IMR-90 (cell line): ENCODE measurements at regions of chr6 and their contacts with region 1.

Region 1: DNA sequence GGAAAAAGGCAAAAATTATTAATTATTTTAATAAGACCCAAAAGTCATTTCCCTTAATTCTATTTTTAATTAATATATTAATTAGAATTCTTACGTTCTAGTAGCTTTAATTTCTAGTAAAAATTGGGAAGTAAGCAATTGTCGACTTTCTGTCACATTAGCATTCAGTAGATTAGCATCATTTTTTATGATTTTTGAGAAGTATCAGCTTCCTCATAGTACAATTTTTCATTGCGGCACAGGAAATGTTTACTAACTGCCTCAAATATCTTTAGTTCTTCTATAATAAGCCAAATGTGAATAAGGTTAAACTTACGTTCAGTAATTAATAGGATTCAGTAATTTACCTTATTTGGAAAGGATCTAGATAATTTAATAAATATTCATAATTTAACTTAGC is 687.4 kb downstream of the EPM2A start:
- DNase-seq: no peak
- ATAC-seq: no peak
- H3K4me3 ChIP-seq: no peak overlapping the region
- H3K27ac ChIP-seq: no peak overlapping the region
- H3K4me1 ChIP-seq: peaks cover 4% of the 10 kb centered on the region; the same call in 1 of the 2 replicates
- H3K27me3 ChIP-seq: no peaks in the 10 kb centered on the region
- CTCF ChIP-seq: no peak
- POLR2A ChIP-seq: no peak
- RAD21 ChIP-seq: no peak

Region 2: DNA sequence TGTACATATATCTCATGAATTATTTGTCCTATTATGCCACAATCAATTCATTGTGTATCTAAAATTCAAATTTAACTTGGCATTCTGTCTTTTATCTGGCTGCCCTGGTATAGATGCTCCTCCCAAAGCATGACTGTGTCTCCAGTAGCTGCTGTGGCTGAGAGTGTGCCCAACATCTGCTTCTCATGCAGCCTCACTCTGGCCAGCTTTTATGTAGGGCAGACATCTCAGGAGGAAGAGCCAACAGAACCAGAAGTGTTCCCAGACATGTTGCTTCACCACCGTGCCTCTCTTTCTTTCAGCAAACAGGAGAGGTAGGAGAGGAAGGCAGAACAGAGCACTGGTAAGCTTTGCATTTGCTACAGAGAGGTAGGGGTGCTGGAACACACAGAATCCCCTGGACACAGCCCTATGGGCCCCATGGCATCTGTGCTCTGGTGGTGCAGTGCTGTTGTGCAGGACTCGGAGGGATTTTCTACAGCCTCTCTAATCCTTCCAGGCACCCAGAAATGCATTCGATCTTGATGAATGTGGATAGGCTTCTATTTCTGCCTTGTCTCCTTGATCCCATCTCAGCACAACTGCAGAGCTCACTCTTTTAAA is 125.7 kb before region 1 on chr6:
- CTCF ChIA-PET with region 1: no interaction called
- POLR2A ChIA-PET with region 1: no interaction called
- dilution Hi-C with region 1: no loop called
- in situ Hi-C with region 1: no loop called
- intact Hi-C with region 1: no loop called
- DNase-seq: peak; percentile 42
- ATAC-seq: peak; percentile 46; the same call in 1 of the 2 replicates
- H3K4me3 ChIP-seq: no peak overlapping the region
- H3K27ac ChIP-seq: no peak overlapping the region
- H3K4me1 ChIP-seq: no peaks in the 10 kb centered on the region
- H3K27me3 ChIP-seq: no peaks in the 10 kb centered on the region
- CTCF ChIP-seq: no peak
- POLR2A ChIP-seq: no peak
- RAD21 ChIP-seq: no peak

Region 3: DNA sequence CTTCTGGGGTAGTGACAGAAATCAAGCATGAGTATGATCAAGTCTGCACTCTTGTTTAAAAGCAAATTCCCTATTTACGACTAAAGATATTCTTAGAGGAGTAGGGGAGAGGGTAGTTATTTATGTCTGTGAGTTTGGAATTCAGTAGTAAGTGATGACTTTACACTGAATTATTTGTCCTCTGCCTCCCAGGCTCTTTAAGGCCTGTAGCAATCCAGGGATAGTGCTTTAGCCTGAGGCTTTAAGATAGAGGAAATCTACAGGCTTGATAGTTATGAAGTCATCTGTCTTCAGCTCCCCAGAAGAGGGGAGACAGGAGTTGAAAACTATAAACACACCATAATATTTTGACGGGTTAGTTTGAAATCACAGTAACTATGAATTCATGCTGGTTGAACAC is 22.9 kb after region 1 on chr6:
- CTCF ChIA-PET with region 1: no interaction called
- POLR2A ChIA-PET with region 1: no interaction called
- dilution Hi-C with region 1: no loop called
- in situ Hi-C with region 1: no loop called
- intact Hi-C with region 1: loop called (anchors 2 kb)
- DNase-seq: peak; percentile 83
- ATAC-seq: peak; percentile 86
- H3K4me3 ChIP-seq: no peak overlapping the region
- H3K27ac ChIP-seq: peak overlapping the region; percentile 90
- H3K4me1 ChIP-seq: peaks cover 16% of the 10 kb centered on the region
- H3K27me3 ChIP-seq: no peaks in the 10 kb centered on the region
- CTCF ChIP-seq: no peak
- POLR2A ChIP-seq: no peak
- RAD21 ChIP-seq: no peak

Region 4: DNA sequence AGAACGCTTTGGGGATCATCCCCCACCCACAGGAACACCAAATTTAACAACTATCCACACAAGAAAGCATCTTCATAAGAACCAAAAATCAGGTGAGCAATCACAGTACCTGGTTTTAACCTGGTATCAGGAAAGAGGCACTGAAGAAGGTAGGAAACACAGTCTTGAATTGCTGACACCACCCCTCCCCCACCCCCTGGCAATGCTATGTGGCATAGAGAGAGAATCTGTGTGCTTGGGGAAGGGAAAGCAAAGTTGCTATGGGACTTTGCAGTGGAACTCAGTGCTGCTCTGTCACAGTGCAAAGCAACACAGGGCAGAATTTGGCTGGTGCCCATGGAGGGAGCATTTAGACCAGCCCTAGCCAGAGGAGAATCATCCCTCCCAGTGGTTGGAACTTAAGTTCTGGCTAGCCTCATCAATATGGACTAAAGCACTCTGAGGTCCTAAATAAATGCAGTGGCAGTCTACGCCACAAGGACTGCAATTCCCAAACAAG is 121.9 kb after region 1 on chr6:
- CTCF ChIA-PET with region 1: no interaction called
- POLR2A ChIA-PET with region 1: no interaction called
- dilution Hi-C with region 1: no loop called
- in situ Hi-C with region 1: no loop called
- intact Hi-C with region 1: no loop called
- DNase-seq: no peak
- ATAC-seq: no peak
- H3K4me3 ChIP-seq: no peak overlapping the region
- H3K27ac ChIP-seq: no peak overlapping the region
- H3K4me1 ChIP-seq: no peaks in the 10 kb centered on the region
- H3K27me3 ChIP-seq: peaks cover 1% of the 10 kb centered on the region; the same call in 1 of the 2 replicates
- CTCF ChIP-seq: no peak
- POLR2A ChIP-seq: no peak
- RAD21 ChIP-seq: no peak

Region 5: DNA sequence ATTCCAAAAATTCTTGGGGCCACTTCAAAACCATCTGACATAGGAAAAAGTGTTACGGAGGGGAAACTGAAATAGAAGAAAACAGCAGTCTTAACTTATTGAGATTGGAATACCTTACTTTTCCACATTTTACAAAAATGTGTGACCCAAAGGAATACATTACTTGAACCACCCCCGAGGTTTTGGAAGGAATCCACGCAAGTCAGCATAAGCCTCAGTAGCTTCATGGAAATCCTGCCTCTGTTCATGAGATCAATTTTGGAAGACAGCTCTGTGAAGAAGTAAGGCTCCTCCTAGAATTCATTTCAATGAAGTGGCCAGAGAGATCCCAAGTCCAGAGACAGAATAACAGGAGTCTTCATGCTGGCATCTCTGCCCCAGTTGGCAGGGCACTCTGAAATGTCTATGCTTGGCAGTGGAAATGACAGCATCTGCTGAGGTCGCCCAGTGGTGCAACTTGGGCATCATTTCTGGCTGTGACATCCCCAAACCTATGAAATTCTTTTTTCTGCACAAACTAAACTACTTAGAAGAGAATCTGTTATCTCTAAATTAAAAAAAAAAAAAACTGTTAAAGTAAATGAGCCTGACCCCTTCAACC is 554.9 kb after region 1 on chr6:
- CTCF ChIA-PET with region 1: no interaction called
- POLR2A ChIA-PET with region 1: no interaction called
- dilution Hi-C with region 1: no loop called
- in situ Hi-C with region 1: no loop called
- intact Hi-C with region 1: no loop called
- DNase-seq: no peak
- ATAC-seq: no peak
- H3K4me3 ChIP-seq: no peak overlapping the region
- H3K27ac ChIP-seq: no peak overlapping the region
- H3K4me1 ChIP-seq: no peaks in the 10 kb centered on the region
- H3K27me3 ChIP-seq: no peaks in the 10 kb centered on the region
- CTCF ChIP-seq: no peak
- POLR2A ChIP-seq: no peak
- RAD21 ChIP-seq: no peak